MCF 10A (cell line): ENCODE measurements at regions of chr1 and their contacts with region 1.

Region 1: DNA sequence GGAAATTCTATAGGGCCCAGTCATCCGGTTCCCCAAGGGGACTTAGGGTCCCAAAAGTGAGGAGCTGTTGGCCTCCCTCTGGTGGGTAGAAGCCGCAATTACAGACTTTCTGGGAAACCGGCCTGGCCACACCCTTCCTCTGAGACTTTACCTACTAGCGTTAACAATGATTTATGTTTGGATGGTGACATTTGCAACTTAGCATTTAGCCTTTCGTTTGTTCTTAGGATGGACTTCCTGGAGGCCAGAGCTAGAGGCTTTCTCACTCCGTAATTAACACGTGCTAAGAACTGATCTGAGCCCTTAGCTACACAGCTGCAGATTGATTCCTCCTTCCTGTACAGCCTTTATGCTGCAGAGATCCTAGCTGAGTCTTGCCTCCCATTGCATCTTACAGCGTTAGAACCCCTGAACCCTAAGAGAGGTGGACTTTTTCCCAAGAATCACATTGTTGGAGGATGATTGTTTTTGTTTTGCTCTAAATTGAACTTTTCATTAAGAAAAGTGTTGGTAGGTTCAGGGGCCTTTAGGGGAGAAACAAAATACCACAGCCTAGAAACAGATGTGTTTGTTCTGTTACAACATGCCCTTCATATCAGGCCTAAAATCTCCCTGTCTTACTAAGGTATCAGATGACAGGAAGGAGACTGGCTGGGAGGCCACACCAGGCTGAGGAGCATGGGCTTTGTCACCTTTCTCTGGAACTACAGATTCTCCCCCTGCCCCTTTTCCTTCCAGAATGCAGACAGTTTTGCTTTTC is 2.0 kb downstream of the S100A11 start:
- DNase-seq: peak; percentile 89
- H3K4me3 Mint-ChIP-seq: peak overlapping the region; percentile 84
- H3K27ac Mint-ChIP-seq: peak overlapping the region; percentile 86
- H3K4me1 Mint-ChIP-seq: peaks cover 28% of the 10 kb centered on the region
- H3K27me3 Mint-ChIP-seq: no peaks in the 10 kb centered on the region
- CTCF ChIP-seq: peak; percentile 99

Region 2: GRCh38 chr1:151762941-151763921 is 271.6 kb before region 1 on chr1 and contains the start of gene MRPL9:
- CTCF ChIA-PET with region 1: no interaction called
- POLR2A ChIA-PET with region 1: no interaction called
- intact Hi-C with region 1: no loop called
- DNase-seq: peak; percentile 84
- H3K4me3 Mint-ChIP-seq: peak within 1 kb of the TSS; percentile 92
- H3K27ac Mint-ChIP-seq: peak within 1 kb of the TSS; percentile 97
- H3K4me1 Mint-ChIP-seq: peaks cover 17% of the 10 kb centered on the region
- H3K27me3 Mint-ChIP-seq: no peaks in the 10 kb centered on the region
- CTCF ChIP-seq: no peak
- total RNA-seq, gene MRPL9: 145 and 146 TPM in 2 replicates

Region 3: DNA sequence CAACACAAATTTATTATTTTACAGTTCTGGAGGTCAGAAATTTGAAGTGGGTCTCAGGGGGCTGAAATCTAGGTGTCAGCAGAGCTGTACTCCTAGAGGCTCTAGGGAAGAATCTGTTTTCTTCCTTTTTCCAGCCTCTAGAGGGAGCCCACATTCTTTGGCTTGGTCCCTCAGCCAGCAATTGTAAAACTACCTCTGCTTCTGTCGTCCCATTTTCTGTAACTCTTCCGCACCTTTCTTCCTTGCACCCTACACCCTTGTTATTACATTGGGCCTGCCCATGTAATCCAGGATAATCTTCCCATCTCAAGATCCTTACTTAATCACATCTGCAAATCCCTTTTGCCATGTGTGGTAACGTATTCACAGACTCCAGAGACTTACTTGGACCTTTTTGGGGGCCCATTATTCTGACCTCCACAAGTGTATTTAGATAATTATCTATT is 100.8 kb before region 1 on chr1:
- CTCF ChIA-PET with region 1: interaction called, 12 read pairs
- POLR2A ChIA-PET with region 1: interaction called, 52 read pairs
- intact Hi-C with region 1: loop called (anchors 1 kb)
- DNase-seq: peak; percentile 82
- H3K4me3 Mint-ChIP-seq: no peak overlapping the region
- H3K27ac Mint-ChIP-seq: no peak overlapping the region
- H3K4me1 Mint-ChIP-seq: peaks cover 11% of the 10 kb centered on the region
- H3K27me3 Mint-ChIP-seq: no peaks in the 10 kb centered on the region
- CTCF ChIP-seq: peak; percentile 96

Region 4: DNA sequence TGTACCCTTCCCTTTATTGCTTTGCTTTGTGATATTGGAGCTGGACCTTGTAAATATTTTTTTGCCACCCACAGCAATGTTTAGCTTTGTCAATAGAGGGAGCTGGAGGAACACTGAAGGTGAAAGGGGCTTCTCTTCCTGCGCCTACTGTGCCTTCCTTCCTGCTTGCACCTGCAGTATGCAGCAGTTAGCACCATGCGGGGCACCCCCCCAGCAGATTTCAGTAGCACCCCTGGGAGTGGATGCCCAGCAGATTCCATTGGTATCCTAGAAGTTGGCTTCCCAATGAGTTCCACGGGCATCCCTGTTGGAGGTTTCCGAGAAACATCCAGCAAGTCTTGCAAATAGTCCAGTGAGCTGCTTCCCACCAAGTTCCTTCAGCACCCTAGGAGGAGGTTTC is 66.8 kb before region 1 on chr1:
- CTCF ChIA-PET with region 1: interaction called, 7 read pairs
- POLR2A ChIA-PET with region 1: interaction called, 60 read pairs
- intact Hi-C with region 1: loop called (anchors 1 kb)
- DNase-seq: peak; percentile 86
- H3K4me3 Mint-ChIP-seq: no peak overlapping the region
- H3K27ac Mint-ChIP-seq: no peak overlapping the region
- H3K4me1 Mint-ChIP-seq: peaks cover 34% of the 10 kb centered on the region
- H3K27me3 Mint-ChIP-seq: no peaks in the 10 kb centered on the region
- CTCF ChIP-seq: peak; percentile 91

Region 5: GRCh38 chr1:151993654-151994496 is 41.0 kb before region 1 on chr1 and contains the start of gene S100A10:
- CTCF ChIA-PET with region 1: interaction called, 54 read pairs
- POLR2A ChIA-PET with region 1: interaction called, 218 read pairs
- intact Hi-C with region 1: no loop called
- DNase-seq: peak; percentile 86
- H3K4me3 Mint-ChIP-seq: peak within 1 kb of the TSS; percentile 89
- H3K27ac Mint-ChIP-seq: peak within 1 kb of the TSS; percentile 96
- H3K4me1 Mint-ChIP-seq: peaks cover 54% of the 10 kb centered on the region
- H3K27me3 Mint-ChIP-seq: no peaks in the 10 kb centered on the region
- CTCF ChIP-seq: no peak
- total RNA-seq, gene S100A10: 1,693 and 1,694 TPM in 2 replicates

Region 6: DNA sequence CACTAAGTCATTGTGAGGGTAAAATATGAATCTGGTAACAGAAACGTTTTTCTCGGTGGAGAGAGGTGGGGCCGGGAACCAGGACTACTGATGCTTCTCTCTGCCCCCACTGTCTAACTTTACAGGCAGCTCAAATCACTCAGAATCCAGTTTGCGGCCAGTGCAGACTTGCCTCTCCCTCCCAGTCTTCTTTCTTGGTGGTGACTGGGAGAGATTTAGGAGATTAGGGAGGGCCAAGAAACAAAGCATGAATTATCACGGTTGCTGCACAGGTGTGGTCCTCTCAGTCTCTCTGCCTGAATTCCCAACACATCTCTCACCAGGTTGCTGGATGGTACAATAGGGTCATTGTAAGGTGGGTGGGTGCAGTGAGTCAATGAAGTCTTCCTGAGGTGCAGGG is 10.7 kb before region 1 on chr1:
- CTCF ChIA-PET with region 1: interaction called, 3 read pairs
- POLR2A ChIA-PET with region 1: interaction called, 45 read pairs
- intact Hi-C with region 1: no loop called
- DNase-seq: no peak
- H3K4me3 Mint-ChIP-seq: no peak overlapping the region
- H3K27ac Mint-ChIP-seq: no peak overlapping the region
- H3K4me1 Mint-ChIP-seq: peaks cover 34% of the 10 kb centered on the region
- H3K27me3 Mint-ChIP-seq: no peaks in the 10 kb centered on the region
- CTCF ChIP-seq: no peak

Region 7: DNA sequence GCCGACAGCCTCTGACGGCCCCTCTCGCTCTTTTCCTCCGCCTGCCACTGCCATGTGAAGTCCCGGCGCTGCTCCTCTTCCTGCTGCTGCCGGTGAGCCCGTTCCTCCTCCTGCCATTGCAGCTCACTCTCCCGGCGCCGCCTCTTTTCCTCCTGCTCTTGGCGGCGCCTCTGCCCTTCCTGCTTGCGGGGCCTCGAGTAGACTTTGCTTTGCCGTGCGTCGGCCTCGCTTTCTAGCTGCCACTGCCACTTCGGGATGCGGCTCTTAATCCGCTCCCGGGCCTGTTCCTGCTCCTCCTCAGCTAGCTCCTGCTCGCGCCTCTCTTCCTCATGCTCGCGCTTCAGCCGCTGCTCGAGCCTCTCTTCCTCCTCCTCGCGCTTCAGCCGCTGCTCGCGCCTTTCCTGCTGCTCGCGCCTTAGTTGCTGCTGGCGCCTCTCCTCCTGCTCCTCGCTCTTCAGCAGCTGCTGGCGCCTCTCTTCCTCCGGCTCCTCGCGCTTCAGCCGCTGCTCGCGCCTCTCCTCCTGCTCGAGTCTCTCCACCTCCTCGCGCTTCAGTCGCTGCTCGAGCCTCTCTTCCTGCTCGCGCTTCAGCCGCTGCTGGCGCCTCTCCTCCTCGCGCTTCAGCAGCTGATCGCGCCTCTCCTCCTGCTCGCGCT is 76.2 kb after region 1 on chr1:
- CTCF ChIA-PET with region 1: interaction called, 3 read pairs
- POLR2A ChIA-PET with region 1: interaction called, 23 read pairs
- intact Hi-C with region 1: no loop called
- DNase-seq: peak; percentile 71
- H3K4me3 Mint-ChIP-seq: no peak overlapping the region
- H3K27ac Mint-ChIP-seq: no peak overlapping the region
- H3K4me1 Mint-ChIP-seq: no peaks in the 10 kb centered on the region
- H3K27me3 Mint-ChIP-seq: no peaks in the 10 kb centered on the region
- CTCF ChIP-seq: no peak

Region 8: GRCh38 chr1:152182431-152182830 is 147.6 kb after region 1 on chr1:
- CTCF ChIA-PET with region 1: interaction called, 34 read pairs
- POLR2A ChIA-PET with region 1: interaction called, 72 read pairs
- intact Hi-C with region 1: no loop called
- DNase-seq: peak; percentile 80
- H3K4me3 Mint-ChIP-seq: no peak overlapping the region
- H3K27ac Mint-ChIP-seq: peak overlapping the region; percentile 82
- H3K4me1 Mint-ChIP-seq: peaks cover 64% of the 10 kb centered on the region
- H3K27me3 Mint-ChIP-seq: no peaks in the 10 kb centered on the region
- CTCF ChIP-seq: peak; percentile 94